Posterior cingulate gyrus (tissue), 11 donors: ENCODE measurements at regions of chr1 and their contacts with region 1.

Region 1: DNA sequence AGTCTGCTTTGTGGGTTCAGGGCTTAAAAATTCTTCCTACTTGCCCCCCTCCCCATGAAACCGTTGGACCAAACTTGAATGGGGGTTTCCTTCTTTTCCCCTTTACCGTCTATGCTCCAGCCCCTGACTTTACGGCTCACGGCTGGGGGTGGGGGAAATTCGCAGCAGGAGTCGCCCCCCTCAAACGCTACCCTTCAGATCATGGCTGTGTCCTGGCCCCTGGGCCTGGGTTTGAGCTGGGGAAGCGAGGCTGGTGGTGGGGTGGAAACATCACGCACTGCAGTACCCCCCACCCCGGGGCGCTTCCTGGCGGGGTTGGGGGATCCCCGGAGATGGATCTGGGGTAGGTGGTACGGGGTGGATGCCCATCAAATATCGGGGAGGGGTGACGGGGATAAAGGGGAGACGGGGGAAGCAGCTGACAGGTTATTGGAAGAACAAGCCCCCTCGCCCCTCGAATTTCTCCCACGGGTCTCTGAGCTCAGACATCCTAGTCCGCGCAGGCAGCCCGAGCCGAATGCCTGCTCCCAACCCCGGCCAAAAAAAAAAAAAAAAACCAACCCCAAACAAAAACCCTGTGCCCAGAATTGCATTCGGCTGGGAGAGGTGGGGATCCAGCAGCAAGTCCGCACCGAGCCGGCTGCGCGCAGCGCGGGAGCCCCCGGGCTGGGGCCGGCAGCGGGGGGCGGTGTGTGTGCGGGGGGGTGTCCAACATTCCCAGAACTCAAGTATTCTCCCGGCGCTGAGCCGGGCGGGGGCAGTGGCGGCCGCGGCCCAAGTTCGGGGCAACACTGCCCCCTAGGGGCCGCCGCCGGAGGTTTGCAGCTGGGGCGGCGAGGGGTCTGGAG is 59.0 kb upstream of the ACOT11 start:
- DNase-seq: peak; percentile 64 to 96 (median 78)

Region 2: DNA sequence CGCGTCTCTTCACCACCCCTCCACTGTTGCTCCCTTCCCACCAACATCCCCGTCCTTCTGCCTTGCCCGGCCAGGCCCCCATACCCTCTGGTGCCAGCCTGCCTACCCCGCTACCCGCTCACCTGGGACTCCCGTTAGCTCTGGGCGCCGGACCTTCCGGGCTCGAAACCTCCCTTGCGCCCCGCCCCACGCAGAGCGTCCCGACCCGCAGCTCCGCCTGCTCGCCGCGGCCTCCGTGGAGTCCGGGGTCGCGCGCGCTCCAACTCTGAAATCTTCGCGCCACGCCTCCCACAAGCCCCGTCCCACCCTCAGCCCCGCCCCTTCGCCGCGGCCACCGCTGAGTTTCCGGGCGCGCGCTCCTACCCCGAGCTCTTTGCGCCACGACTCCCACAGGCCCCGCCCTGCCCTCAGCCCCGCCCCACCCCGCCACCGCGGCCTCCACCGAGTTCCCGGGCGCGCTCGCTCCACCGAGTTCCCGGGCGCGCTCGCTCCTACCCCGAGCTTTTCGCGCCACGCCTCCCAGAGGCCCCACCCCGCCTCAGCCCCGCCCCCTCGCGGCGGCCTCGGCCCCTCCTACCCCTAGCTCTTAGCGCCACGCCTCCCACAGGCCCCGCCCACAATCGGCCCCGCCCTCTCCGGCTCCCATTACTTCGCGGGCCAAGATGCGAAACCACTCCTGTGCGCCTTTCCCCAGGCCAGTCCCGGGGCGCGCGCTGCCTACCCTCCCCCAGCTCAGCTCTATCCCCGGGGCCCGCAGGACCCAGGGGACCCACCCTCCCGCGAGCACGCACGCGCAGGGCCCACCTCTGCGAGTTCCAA is 543.4 kb before region 1 on chr1 and contains the start of gene IFT25:
- intact Hi-C with region 1: loop called (anchors 5 kb)
- DNase-seq: peak; percentile 93 to 100 (median 98)

Region 3: GRCh38 chr1:54121482-54122134 is 367.4 kb before region 1 on chr1:
- intact Hi-C with region 1: loop called (anchors 1 kb)
- DNase-seq: peak; percentile 70 to 98 (median 86)

Region 4: DNA sequence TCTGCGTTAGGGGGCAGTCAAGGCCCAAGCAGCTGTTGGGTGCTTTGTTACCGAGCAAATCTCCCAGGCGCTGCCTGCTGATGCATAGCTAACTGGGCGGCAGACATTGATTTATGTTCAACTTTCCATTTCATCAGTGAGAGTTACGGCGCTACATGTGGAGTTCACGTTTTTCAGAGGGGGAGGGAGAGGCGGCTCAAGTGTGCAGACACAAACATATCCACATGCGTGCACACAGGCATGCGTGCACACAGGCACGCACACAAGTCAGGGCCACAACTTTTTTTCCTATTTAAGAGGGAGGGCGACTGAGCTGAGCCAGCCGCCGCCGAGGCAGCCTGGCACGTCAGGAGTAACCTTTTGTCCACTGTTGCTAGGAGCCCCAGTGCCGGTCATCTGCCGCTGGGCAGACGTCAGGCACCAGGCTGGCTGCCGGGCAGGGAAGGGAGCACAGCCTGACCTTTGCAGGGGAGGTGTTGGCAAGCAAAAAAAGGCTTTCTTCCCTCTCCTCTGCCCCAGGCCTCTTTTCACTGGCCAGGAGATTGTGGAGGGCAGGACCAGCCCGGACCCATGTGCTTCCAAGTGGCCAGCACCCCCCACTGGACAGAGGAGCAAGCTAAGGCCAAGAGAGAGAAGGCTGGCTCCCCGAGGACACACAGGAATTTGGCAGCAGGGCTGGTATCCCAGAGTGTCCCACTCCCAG is 215.8 kb before region 1 on chr1:
- intact Hi-C with region 1: loop called (anchors 1 kb)
- DNase-seq: peak; percentile 62 to 97 (median 76)

Region 5: DNA sequence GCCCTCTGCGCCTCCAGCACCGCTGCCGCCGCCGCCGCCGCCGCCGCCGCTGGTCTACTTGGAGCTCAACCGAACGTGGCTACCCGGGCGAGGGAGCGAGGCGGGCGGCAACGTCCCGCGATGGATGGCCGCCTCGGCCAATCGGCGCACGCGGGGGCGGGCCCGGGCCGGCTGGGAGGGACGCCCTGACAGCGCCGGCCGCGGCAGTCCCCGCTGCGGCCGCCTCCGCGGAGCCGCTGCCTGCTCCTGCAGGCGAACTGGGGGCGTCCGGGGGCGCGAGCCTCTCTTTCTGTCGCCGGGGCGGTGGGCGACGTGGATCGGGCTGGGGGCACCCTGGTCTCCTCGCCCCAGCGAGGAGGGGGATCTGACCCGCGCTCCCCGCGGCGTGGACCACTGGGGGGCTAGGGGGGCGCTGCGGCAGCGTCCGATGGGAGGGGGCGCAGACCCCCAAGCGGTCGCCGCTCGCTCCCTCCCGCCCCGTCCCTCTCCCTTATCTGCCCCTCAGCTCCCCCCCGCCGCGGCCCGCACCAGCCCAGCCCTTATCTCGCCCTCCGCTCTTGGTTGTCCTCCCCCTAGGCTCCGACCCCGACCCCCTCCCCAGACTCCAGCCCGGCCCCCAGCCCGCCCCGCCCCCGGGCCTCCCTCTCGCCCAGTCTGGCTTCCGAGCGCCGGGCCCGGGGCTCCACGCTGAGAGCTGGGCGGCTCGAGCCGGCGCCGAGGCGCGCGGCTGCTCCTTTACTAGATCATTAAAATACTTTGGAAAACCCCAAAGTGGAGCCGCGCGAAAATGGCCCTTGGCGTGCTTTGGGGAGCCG is 82.5 kb before region 1 on chr1 and contains the start of gene SSBP3:
- intact Hi-C with region 1: loop called (anchors 1 kb)
- DNase-seq: peak; percentile 85 to 99 (median 94)

Region 6: DNA sequence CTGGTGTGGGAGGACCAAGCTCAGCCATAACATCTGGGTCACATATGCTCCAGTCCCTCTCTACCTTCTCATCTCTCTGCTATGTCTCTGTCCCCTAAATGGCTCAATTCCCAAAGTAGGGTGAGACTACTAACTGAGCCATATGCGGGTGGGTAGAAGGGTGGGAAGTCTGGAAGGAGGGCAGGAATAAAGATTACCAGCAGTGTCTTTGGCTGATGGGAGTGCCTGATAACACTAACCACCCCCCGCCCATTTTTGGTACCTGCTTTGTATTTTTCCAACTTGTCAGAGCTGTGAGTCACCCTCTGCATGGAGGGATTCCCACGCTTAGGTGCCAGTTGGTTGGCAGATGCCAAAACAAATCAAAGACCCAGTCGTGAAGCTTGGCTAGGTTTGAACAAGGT is 67.9 kb before region 1 on chr1:
- intact Hi-C with region 1: no loop called
- DNase-seq: no peak